B cell (primary cell): ENCODE measurements at regions of chr9 and their contacts with region 1.

Region 1: DNA sequence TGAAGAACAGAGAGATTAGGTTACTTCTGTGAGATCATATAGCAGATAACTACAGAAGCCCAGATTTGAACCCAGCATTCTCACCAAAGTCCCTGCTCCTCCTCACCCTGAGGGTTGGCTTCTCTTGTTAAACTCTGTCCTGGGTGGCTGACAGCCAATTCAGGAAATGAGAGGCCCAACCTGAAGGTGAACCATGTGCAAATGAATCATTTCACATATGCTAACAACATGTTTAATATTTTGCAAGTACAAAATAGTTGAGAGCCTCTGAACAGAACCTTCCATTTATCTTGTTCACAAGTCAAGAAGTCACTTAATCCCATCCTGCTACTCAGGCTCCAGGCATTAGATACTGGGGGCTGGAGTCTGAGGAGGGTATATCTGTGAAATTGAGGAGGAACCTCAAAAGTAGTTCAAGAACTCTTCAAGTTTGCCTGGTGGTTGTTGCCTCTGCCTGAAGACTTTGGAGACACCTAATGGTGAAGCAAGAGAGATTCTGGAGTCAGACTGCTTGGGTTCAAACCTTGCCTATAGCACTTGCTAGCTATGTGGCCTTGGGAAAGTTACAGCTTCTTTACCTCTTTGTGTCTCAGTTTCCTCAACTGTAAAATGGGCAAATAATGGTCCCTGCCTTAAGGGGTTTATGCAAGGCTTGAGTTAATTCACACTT is 564.0 kb downstream of the PSAT1 start:
- DNase-seq: peak; percentile 10
- ATAC-seq: no peak
- H3K4me3 ChIP-seq: no peak overlapping the region
- H3K4me3 Mint-ChIP-seq: no peak overlapping the region
- H3K27ac ChIP-seq: no peak overlapping the region
- H3K27ac Mint-ChIP-seq: no peak overlapping the region
- H3K4me1 ChIP-seq: no peaks in the 10 kb centered on the region
- H3K4me1 Mint-ChIP-seq: no peaks in the 10 kb centered on the region
- H3K27me3 ChIP-seq: peaks cover 0 to 1% (median 0%) of the 10 kb centered on the region in 4 experiments
- H3K27me3 Mint-ChIP-seq: no peaks in the 10 kb centered on the region
- CTCF ChIP-seq: no peak

Region 2: GRCh38 chr9:78601957-78602565 is 258.9 kb before region 1 on chr9:
- CTCF ChIA-PET with region 1: no interaction called
- POLR2A ChIA-PET with region 1: no interaction called
- intact Hi-C with region 1: loop called (anchors 5 kb)
- DNase-seq: peak; percentile 55
- ATAC-seq: no peak
- H3K4me3 ChIP-seq: no peak overlapping the region
- H3K4me3 Mint-ChIP-seq: no peak overlapping the region
- H3K27ac ChIP-seq: no peak overlapping the region
- H3K27ac Mint-ChIP-seq: no peak overlapping the region
- H3K4me1 ChIP-seq: no peaks in the 10 kb centered on the region
- H3K4me1 Mint-ChIP-seq: no peaks in the 10 kb centered on the region
- H3K27me3 ChIP-seq: peaks cover 0 to 7% (median 0%) of the 10 kb centered on the region in 4 experiments
- H3K27me3 Mint-ChIP-seq: peaks cover 20% of the 10 kb centered on the region
- CTCF ChIP-seq: peak; percentile 84

Region 3: DNA sequence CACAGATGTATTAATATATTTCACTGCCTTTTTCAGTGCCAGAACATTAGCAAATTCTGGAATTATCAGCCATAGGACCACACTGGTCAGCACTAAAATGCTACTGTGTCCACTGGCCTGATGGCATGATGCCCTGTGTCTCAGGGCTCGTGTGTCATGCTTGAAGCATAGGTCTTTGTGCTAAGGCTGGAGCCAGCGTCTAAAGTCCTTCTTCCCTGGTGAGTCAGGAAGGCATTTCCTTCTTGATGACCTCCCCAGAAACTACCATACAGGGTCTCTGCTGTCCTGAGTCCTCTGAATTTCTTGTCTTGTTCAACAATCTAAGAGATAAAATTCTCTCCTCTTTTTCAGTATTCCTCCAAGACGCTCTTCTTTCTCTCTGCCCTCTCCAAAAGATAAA is 74.1 kb before region 1 on chr9:
- CTCF ChIA-PET with region 1: no interaction called
- POLR2A ChIA-PET with region 1: no interaction called
- intact Hi-C with region 1: no loop called
- DNase-seq: no peak
- ATAC-seq: no peak
- H3K4me3 ChIP-seq: no peak overlapping the region
- H3K4me3 Mint-ChIP-seq: no peak overlapping the region
- H3K27ac ChIP-seq: no peak overlapping the region
- H3K27ac Mint-ChIP-seq: no peak overlapping the region
- H3K4me1 ChIP-seq: no peaks in the 10 kb centered on the region
- H3K4me1 Mint-ChIP-seq: peaks cover 2% of the 10 kb centered on the region
- H3K27me3 ChIP-seq: no peaks in the 10 kb centered on the region
- H3K27me3 Mint-ChIP-seq: peaks cover 2% of the 10 kb centered on the region
- CTCF ChIP-seq: no peak

Region 4: GRCh38 chr9:79140773-79141172 is 279.8 kb after region 1 on chr9:
- CTCF ChIA-PET with region 1: no interaction called
- POLR2A ChIA-PET with region 1: no interaction called
- intact Hi-C with region 1: no loop called
- DNase-seq: no peak
- ATAC-seq: no peak
- H3K4me3 ChIP-seq: no peak overlapping the region
- H3K4me3 Mint-ChIP-seq: no peak overlapping the region
- H3K27ac ChIP-seq: no peak overlapping the region
- H3K27ac Mint-ChIP-seq: no peak overlapping the region
- H3K4me1 ChIP-seq: no peaks in the 10 kb centered on the region
- H3K4me1 Mint-ChIP-seq: no peaks in the 10 kb centered on the region
- H3K27me3 ChIP-seq: no peaks in the 10 kb centered on the region
- H3K27me3 Mint-ChIP-seq: no peaks in the 10 kb centered on the region
- CTCF ChIP-seq: no peak